ENCODE measurements at regions of chr5 and their contacts with region 1.

Region 1: GRCh38 chr5:63401436-63402046 is 560.7 kb downstream of the HTR1A start:
- DNase-seq: peak; percentile 66 to 81
- H3K4me3 ChIP-seq: no peak overlapping the region
- H3K4me3 Mint-ChIP-seq: no peak overlapping the region
- H3K27ac Mint-ChIP-seq: no peak overlapping the region
- H3K4me1 ChIP-seq: no peaks in the 10 kb centered on the region
- H3K4me1 Mint-ChIP-seq: peaks cover 6% of the 10 kb centered on the region
- H3K27me3 ChIP-seq: no peaks in the 10 kb centered on the region
- H3K27me3 Mint-ChIP-seq: no peaks in the 10 kb centered on the region
- CTCF ChIP-seq: peak; percentile 85 to 90

Region 2: DNA sequence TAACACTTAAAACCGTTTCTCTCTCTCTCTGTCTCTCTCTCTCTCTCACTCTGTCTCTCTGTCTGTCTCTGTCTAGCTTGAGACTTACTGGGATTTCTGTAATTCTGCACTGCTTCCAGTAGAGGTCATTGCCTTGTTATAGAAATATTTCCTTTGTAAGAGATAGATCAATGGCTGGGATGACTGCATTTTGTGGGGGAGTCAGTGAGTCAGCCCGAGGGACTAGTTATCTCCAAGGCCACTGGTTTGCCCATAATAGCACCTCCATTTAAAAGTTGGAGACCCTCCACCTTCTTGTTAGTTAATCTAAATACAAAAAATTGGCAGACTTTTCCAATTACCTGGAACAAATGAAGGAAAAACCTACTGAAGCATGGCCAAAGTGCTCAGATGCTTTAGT is 275.7 kb before region 1 on chr5:
- CTCF ChIA-PET with region 1: interaction called, 5 read pairs
- POLR2A ChIA-PET with region 1: no interaction called
- intact Hi-C with region 1: loop called (anchors 2 kb)
- DNase-seq: peak; percentile 26 to 31
- H3K4me3 ChIP-seq: no peak overlapping the region
- H3K4me3 Mint-ChIP-seq: no peak overlapping the region
- H3K27ac Mint-ChIP-seq: no peak overlapping the region
- H3K4me1 ChIP-seq: no peaks in the 10 kb centered on the region
- H3K4me1 Mint-ChIP-seq: peaks cover 7% of the 10 kb centered on the region
- H3K27me3 ChIP-seq: no peaks in the 10 kb centered on the region
- H3K27me3 Mint-ChIP-seq: no peaks in the 10 kb centered on the region
- CTCF ChIP-seq: peak; percentile 63

Region 3: DNA sequence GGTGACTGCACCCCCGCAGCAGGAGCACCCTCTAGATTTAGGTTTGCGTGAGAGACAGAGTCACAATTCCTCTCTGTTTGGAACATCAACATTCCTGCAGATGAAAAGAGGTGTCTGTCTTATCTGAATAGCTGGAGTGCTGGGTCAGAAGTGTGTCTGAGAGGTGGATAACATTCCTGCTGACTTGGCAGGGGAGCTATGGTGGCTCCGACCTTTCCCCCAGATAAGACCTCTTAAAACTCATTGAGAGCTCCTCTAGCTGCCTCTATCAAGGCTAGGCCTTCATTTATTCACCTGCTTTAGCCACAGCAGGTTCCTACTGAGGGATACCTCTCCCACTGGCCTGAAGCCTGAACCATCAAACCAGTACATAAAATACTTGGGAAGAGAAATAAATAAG is 207.4 kb before region 1 on chr5:
- CTCF ChIA-PET with region 1: no interaction called
- POLR2A ChIA-PET with region 1: no interaction called
- intact Hi-C with region 1: no loop called
- DNase-seq: no peak
- H3K4me3 ChIP-seq: no peak overlapping the region
- H3K4me3 Mint-ChIP-seq: no peak overlapping the region
- H3K27ac Mint-ChIP-seq: no peak overlapping the region
- H3K4me1 ChIP-seq: peaks cover 3% of the 10 kb centered on the region; the same call in 1 of the 2 replicates
- H3K4me1 Mint-ChIP-seq: no peaks in the 10 kb centered on the region
- H3K27me3 ChIP-seq: no peaks in the 10 kb centered on the region
- H3K27me3 Mint-ChIP-seq: no peaks in the 10 kb centered on the region
- CTCF ChIP-seq: no peak

Region 4: GRCh38 chr5:63228144-63228543 is 173.4 kb before region 1 on chr5:
- CTCF ChIA-PET with region 1: no interaction called
- POLR2A ChIA-PET with region 1: no interaction called
- intact Hi-C with region 1: loop called (anchors 5 kb)
- DNase-seq: peak in 1 of 2 experiments; percentile 34
- H3K4me3 ChIP-seq: no peak overlapping the region
- H3K4me3 Mint-ChIP-seq: no peak overlapping the region
- H3K27ac Mint-ChIP-seq: no peak overlapping the region
- H3K4me1 ChIP-seq: peaks cover 22% of the 10 kb centered on the region
- H3K4me1 Mint-ChIP-seq: peaks cover 14% of the 10 kb centered on the region
- H3K27me3 ChIP-seq: no peaks in the 10 kb centered on the region
- H3K27me3 Mint-ChIP-seq: no peaks in the 10 kb centered on the region
- CTCF ChIP-seq: no peak

Region 5: GRCh38 chr5:63428705-63429104 is 27.2 kb after region 1 on chr5:
- CTCF ChIA-PET with region 1: no interaction called
- POLR2A ChIA-PET with region 1: no interaction called
- intact Hi-C with region 1: no loop called
- DNase-seq: no peak
- H3K4me3 ChIP-seq: no peak overlapping the region
- H3K4me3 Mint-ChIP-seq: no peak overlapping the region
- H3K27ac Mint-ChIP-seq: no peak overlapping the region
- H3K4me1 ChIP-seq: no peaks in the 10 kb centered on the region
- H3K4me1 Mint-ChIP-seq: no peaks in the 10 kb centered on the region
- H3K27me3 ChIP-seq: no peaks in the 10 kb centered on the region
- H3K27me3 Mint-ChIP-seq: no peaks in the 10 kb centered on the region
- CTCF ChIP-seq: peak in 1 of 2 experiments; percentile 20

Region 6: DNA sequence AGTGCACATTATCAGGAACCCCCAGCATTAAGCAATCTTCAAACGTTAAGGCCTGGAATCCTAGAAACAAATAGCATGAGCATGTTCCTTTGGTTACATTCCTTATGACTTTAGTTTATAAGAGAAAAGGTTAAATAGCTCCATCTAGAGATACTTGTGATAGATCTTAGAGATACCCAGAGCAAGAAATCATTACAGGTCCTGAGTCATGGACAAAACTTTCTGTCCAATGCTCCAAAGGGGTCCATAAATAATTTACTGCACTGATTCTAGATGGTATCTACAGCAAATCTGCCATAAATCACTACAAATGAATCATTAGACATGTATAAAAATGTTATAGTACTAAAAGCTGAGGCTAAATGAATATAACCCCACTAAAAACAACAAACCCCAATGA is 421.1 kb after region 1 on chr5:
- CTCF ChIA-PET with region 1: interaction called, 3 read pairs
- POLR2A ChIA-PET with region 1: no interaction called
- intact Hi-C with region 1: loop called (anchors 1 kb)
- DNase-seq: no peak
- H3K4me3 ChIP-seq: no peak overlapping the region
- H3K4me3 Mint-ChIP-seq: no peak overlapping the region
- H3K27ac Mint-ChIP-seq: no peak overlapping the region
- H3K4me1 ChIP-seq: no peaks in the 10 kb centered on the region
- H3K4me1 Mint-ChIP-seq: no peaks in the 10 kb centered on the region
- H3K27me3 ChIP-seq: no peaks in the 10 kb centered on the region
- H3K27me3 Mint-ChIP-seq: no peaks in the 10 kb centered on the region
- CTCF ChIP-seq: no peak

Region 7: DNA sequence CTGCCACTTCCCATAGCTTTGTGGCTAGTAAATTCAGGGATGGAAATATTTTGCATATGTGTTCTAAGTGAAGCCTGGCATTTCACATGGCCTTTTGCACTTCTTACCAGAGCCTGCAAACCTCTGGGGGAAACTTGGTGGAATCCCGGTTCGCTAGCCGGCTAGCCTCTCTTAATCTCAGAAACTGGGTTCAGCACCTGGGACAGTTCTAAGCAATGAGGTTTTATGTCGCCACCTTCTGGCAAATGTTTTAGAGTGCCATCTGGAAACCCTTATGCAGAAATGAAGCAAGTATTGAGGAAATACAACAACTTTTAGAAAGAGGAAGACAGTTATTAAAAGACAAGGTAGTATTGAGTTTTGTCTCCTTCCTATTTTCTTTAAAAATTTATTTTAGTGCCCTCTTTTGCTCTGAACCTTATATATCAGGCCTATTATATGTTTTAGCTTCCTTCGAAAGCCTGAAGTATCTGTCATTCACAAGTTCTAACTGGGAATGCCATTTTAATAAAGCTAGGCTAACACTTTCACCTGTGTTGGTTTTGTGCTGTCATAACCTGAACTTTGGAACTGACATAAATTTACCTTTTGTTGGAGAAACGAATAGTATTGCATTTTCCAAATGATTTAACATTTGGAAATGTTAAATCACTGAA is 561.7 kb after region 1 on chr5:
- CTCF ChIA-PET with region 1: no interaction called
- POLR2A ChIA-PET with region 1: no interaction called
- intact Hi-C with region 1: loop called (anchors 1 kb)
- DNase-seq: peak; percentile 57 to 74
- H3K4me3 ChIP-seq: no peak overlapping the region
- H3K4me3 Mint-ChIP-seq: no peak overlapping the region
- H3K27ac Mint-ChIP-seq: no peak overlapping the region
- H3K4me1 ChIP-seq: no peaks in the 10 kb centered on the region
- H3K4me1 Mint-ChIP-seq: no peaks in the 10 kb centered on the region
- H3K27me3 ChIP-seq: no peaks in the 10 kb centered on the region
- H3K27me3 Mint-ChIP-seq: peaks cover 3% of the 10 kb centered on the region
- CTCF ChIP-seq: peak; percentile 62 to 78